Heart right ventricle (tissue), 16 donors: ENCODE measurements at regions of chr7 and their contacts with region 1.

Region 1: DNA sequence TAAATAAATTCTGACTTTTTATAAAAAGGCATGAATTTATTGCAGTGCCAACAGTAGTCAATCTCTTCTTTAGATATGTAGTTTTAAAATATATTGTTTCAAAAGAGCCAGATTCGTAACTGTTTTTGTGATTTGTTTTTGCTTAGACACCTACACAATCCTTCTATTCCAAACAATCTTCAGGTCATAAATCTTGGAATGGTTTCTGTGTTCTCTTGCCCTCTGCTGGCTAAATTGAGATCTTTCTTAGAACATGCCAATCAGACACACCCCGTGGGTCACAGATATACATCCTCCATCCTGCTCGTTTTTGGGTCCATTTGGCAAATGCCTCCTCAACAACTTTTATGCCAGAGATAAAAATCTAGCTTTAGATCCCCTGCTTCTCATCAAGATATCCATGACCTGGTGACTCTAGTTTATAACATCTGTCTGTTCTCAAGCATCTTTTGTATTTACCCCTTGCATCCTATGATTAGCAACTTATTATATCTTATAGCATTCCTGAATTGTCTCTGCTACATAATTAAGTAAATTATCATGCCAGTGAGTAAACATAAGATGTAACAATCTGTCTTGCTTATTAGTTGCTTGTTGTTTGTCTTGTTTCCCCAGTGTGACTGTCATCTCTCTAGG is 35.3 kb upstream of the IFRD1 start:
- DNase-seq: no peak
- ATAC-seq: peak in 2 of 8 donors; percentile 57 to 63
- H3K4me3 ChIP-seq: no peak overlapping the region
- H3K27ac ChIP-seq: no peak overlapping the region
- H3K4me1 ChIP-seq: peaks cover 0 to 10% (median 0%) of the 10 kb centered on the region in 9 donors
- H3K27me3 ChIP-seq: no peaks in the 10 kb centered on the region
- CTCF ChIP-seq: peak in 8 of 9 donors; percentile 18 to 65 (median 60)

Region 2: DNA sequence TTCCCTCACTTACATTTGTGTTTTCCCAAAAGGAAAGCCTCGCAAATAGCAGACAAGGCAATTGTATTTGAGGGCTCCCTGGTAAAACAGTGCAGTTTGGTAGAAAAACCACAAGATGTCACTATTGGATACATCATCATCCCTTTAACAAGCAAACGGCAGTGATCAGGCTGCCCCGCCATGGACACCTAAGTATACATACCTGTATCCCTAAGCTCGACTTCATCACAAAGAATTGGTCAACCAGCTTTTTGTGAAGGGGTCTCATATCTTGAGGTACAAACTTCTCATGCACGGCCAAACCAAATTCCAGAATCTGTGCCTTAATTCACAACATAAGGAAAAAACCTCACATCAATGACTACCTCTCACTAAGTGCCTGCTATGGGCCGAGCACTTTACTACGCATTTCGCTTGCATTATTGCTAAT is 673.1 kb before region 1 on chr7:
- intact Hi-C with region 1: loop called in 1 of 10 experiments (anchors 5 kb)
- DNase-seq: peak in 1 of 2 donors; percentile 24
- ATAC-seq: peak in 7 of 8 donors; percentile 34 to 76 (median 64)
- H3K4me3 ChIP-seq: no peak overlapping the region
- H3K27ac ChIP-seq: no peak overlapping the region
- H3K4me1 ChIP-seq: peaks cover 0 to 3% (median 0%) of the 10 kb centered on the region in 9 donors
- H3K27me3 ChIP-seq: no peaks in the 10 kb centered on the region
- CTCF ChIP-seq: peak; percentile 31 to 76 (median 63)

Region 3: DNA sequence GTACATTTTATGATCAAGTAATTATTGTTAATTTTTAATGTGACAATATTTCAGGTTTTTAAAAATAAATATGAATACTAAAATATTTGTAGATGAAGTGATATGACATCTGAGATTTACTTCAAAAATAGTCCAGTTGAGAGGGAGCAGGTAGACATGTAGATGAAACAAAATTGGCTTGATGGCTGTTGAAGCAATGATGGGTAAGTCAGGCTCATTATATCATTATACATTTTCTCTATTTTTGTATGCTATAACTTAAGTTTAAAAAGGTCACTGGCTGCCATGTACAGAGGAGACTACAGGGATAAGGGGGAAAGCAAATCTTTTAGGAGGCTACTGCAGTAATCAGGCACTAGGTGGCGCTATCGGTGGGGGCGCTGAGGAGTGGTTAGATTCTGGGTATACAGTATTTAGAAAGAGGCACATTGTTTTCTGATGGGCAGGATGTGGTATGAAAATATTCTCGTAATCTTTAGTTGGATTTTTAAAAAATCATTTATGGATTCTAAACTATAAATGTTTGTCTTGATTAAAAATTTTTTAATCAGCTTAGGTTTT is 662.9 kb before region 1 on chr7:
- intact Hi-C with region 1: loop called in 4 of 10 experiments (anchors 5 to 10 kb)
- DNase-seq: peak; percentile 52 to 53
- ATAC-seq: peak in 5 of 8 donors; percentile 29 to 65 (median 62)
- H3K4me3 ChIP-seq: no peak overlapping the region
- H3K27ac ChIP-seq: no peak overlapping the region
- H3K4me1 ChIP-seq: no peaks in the 10 kb centered on the region
- H3K27me3 ChIP-seq: no peaks in the 10 kb centered on the region
- CTCF ChIP-seq: peak; percentile 36 to 85 (median 75)

Region 4: DNA sequence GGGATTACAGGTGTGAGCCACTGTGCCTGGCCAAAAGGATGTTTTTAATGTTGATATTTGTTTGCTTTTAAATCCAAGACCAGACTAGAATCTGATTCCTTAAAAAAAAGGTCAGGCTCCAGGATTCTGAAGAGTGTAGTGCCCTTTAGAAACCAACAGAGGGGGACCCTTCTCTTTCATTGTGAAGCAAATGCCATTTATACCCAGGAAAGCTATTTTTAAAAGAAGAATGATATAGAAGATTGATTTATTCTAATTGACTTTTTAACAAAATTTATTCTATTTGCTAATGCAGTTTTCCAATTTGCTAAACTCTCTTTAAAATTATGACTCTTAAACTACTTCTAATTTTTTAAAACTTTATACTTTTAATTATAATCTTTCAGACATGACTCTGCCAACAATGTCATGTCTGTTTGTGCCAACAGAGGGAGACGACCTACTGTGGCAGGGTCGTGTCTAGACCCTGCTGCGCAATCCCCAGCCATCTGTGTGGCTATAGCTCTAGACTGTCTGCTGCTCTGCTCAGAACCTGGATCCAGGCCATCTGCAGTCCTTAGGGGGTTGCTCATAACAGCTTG is 651.7 kb before region 1 on chr7:
- intact Hi-C with region 1: loop called in 8 of 10 experiments (anchors 5 to 10 kb)
- DNase-seq: no peak
- ATAC-seq: peak in 4 of 8 donors; percentile 38 to 69 (median 54)
- H3K4me3 ChIP-seq: no peak overlapping the region
- H3K27ac ChIP-seq: no peak overlapping the region
- H3K4me1 ChIP-seq: peaks cover 0 to 14% (median 0%) of the 10 kb centered on the region in 9 donors
- H3K27me3 ChIP-seq: no peaks in the 10 kb centered on the region
- CTCF ChIP-seq: peak; percentile 19 to 74 (median 65)

Region 5: DNA sequence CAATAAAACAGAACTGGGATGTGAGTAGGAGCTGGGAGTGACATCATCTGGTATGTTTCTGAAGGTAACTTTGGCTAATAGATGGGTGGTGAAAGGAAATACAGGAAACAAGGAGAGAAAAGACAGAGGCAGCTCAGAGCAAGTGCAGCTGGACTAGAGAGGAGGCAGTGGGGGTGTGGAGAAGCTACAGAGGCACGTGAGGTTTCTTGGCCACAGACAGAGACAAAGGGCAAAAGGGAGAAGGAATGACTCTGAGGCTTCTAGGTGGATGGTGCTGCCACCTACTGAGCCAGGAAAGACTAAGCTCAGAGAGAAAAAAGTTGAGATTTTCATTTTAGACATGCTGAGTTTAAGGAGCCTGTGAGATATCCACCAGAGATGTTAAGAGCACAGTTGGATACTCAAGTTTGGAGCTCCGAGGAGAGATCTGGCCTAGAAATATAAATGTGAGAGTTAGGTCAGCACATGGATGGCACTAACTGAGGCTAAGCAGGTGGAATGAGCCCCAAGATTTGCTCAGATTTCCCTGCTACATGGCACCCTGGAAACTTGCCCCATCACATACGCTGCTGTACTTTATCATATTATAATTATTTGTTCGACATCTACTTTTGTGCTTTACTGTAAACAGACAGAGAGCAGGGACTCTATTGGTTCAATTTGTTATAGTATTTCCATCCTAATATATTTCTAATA is 559.7 kb before region 1 on chr7:
- intact Hi-C with region 1: loop called in 1 of 10 experiments (anchors 10 kb)
- DNase-seq: peak in 1 of 2 donors; percentile 21
- ATAC-seq: peak in 7 of 8 donors; percentile 38 to 79 (median 67)
- H3K4me3 ChIP-seq: no peak overlapping the region
- H3K27ac ChIP-seq: no peak overlapping the region
- H3K4me1 ChIP-seq: peaks cover 0 to 9% (median 0%) of the 10 kb centered on the region in 9 donors
- H3K27me3 ChIP-seq: no peaks in the 10 kb centered on the region
- CTCF ChIP-seq: peak in 8 of 9 donors; percentile 17 to 58 (median 46)

Region 6: GRCh38 chr7:111953611-111954010 is 461.4 kb before region 1 on chr7:
- intact Hi-C with region 1: loop called in 4 of 10 experiments (anchors 5 to 10 kb)
- DNase-seq: peak in 1 of 2 donors; percentile 26
- ATAC-seq: peak; percentile 60 to 85 (median 75)
- H3K4me3 ChIP-seq: no peak overlapping the region
- H3K27ac ChIP-seq: peak overlapping the region in 4 of 10 donors; percentile 18 to 61 (median 55)
- H3K4me1 ChIP-seq: peaks cover 5 to 48% (median 29%) of the 10 kb centered on the region in 9 donors
- H3K27me3 ChIP-seq: no peaks in the 10 kb centered on the region
- CTCF ChIP-seq: peak in 6 of 9 donors; percentile 14 to 56 (median 38)

Region 7: GRCh38 chr7:112495810-112496462 is 81.0 kb after region 1 on chr7:
- intact Hi-C with region 1: loop called in 3 of 10 experiments (anchors 2 to 10 kb)
- DNase-seq: peak in 1 of 2 donors; percentile 52
- ATAC-seq: peak; percentile 67 to 88 (median 86)
- H3K4me3 ChIP-seq: no peak overlapping the region
- H3K27ac ChIP-seq: no peak overlapping the region
- H3K4me1 ChIP-seq: peaks cover 0 to 11% (median 0%) of the 10 kb centered on the region in 9 donors
- H3K27me3 ChIP-seq: no peaks in the 10 kb centered on the region
- CTCF ChIP-seq: peak; percentile 25 to 77 (median 63)